Dendritic cell treated with granulocyte-macrophage colony-stimulating factor and Interleukin-4, amounts not matched to agents 40 ng/mL and 50 ng/mL, for 4 days (primary cell): ENCODE measurements at regions of chr11 and their contacts with region 1.

Region 1: DNA sequence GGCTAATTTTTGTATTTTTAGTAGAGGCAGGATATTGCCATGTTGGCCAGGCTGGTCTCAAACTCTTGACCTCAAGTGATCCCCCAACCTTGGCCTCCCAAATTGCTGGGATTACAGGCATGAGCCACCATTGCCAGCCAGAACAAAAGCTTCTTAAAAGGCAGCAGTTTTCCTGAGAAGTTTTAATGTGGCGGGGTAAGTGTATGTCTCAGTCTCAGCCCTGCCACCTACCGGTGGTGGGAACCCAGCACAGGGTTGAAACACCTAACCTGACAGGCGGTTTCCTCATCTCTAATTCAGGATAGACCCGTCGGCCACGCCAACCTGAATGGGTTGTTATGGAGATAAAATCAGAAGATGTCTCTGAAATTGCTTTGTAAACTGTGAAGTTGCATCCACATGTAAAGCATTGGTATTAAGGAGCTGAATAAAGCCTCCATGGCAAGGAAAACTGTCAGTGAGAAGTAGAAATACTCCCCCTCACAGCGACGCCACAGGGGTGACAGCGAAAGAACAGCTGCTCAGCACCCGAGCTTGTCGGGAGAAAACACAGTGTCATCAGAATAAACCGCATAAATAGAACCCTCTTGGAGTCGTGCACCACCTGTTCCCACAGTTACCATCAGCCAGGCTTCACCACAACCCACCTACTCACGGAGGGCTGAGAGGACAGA is 165.9 kb upstream of the NCAM1 start:
- H3K4me3 Mint-ChIP-seq: no peak overlapping the region
- H3K27ac Mint-ChIP-seq: no peak overlapping the region
- H3K4me1 Mint-ChIP-seq: peaks cover 6% of the 10 kb centered on the region
- H3K27me3 Mint-ChIP-seq: no peaks in the 10 kb centered on the region

Region 2: GRCh38 chr11:112806876-112807275 is 11.6 kb after region 1 on chr11:
- intact Hi-C with region 1: no loop called
- H3K4me3 Mint-ChIP-seq: no peak overlapping the region
- H3K27ac Mint-ChIP-seq: no peak overlapping the region
- H3K4me1 Mint-ChIP-seq: no peaks in the 10 kb centered on the region
- H3K27me3 Mint-ChIP-seq: no peaks in the 10 kb centered on the region

Region 3: GRCh38 chr11:113289431-113290187 is 494.3 kb after region 1 on chr11:
- intact Hi-C with region 1: loop called (anchors 2 kb)
- H3K4me3 Mint-ChIP-seq: no peak overlapping the region
- H3K27ac Mint-ChIP-seq: no peak overlapping the region
- H3K4me1 Mint-ChIP-seq: no peaks in the 10 kb centered on the region
- H3K27me3 Mint-ChIP-seq: peaks cover 4% of the 10 kb centered on the region